B cell (primary cell): ENCODE measurements at regions of chr17 and their contacts with region 1.

Region 1: DNA sequence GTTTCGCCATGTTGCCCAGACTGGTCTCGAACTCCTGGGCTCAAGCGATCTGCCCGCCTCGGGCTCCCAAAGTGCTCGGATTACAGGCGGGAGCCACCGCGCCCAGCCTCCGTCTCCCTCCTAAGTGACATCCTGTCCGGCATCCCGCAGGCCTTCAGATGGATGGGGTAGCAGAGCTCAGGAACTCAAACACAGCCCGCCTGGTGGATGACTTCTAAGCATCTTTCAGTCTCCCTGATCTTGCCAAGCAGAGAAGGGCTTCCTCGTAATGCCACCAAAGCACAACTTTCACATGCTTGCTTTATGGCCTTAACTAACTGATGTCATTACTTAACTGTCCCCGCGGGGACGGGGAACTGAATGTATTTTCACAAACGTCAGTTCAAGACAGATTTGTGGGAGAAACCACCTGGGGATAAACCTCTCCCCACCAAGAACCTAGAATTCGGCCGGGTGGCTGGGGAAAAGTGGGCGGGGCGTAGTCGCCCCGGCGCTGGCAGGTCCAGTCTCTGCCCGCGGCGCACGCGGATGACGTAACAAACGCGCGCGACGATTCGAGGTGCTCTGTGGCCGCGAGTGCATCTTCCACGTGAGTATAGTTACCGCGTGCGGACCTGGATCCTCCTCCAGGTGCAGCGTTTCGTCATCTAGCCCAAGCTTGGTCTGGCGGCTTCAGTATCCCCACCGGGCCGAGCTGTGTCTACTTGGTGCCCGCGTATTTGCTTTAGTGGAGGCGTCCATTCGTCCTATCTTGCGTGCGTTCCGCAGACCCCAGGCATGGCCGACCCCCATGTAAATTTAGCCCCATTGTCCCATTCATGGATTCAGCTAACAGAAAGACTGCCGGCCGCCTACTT is at the start of gene PFAS:
- DNase-seq: peak; percentile 98
- ATAC-seq: peak; percentile 48
- H3K4me3 ChIP-seq: peak within 1 kb of the TSS; percentile 65 to 100 (median 78)
- H3K4me3 Mint-ChIP-seq: peak within 1 kb of the TSS; percentile 96
- H3K27ac ChIP-seq: peak within 1 kb of the TSS; percentile 99 to 100
- H3K27ac Mint-ChIP-seq: peak within 1 kb of the TSS; percentile 100
- H3K4me1 ChIP-seq: peaks cover 29 to 37% of the 10 kb centered on the region in 2 donors
- H3K4me1 Mint-ChIP-seq: peaks cover 44% of the 10 kb centered on the region
- H3K27me3 ChIP-seq: no peaks in the 10 kb centered on the region
- H3K27me3 Mint-ChIP-seq: no peaks in the 10 kb centered on the region
- CTCF ChIP-seq: no peak
- total RNA-seq, gene PFAS: 65.5 and 66.4 TPM in 2 replicates

Region 2: GRCh38 chr17:8118769-8119580 is 130.0 kb before region 1 on chr17:
- CTCF ChIA-PET with region 1: interaction called, 9 read pairs
- POLR2A ChIA-PET with region 1: interaction called, 20 read pairs
- intact Hi-C with region 1: loop called (anchors 1 kb)
- DNase-seq: peak; percentile 92
- ATAC-seq: peak; percentile 68
- H3K4me3 ChIP-seq: peak overlapping the region; percentile 61 to 85 (median 69)
- H3K4me3 Mint-ChIP-seq: peak overlapping the region; percentile 94
- H3K27ac ChIP-seq: peak overlapping the region; percentile 13 to 34
- H3K27ac Mint-ChIP-seq: peak overlapping the region; percentile 98
- H3K4me1 ChIP-seq: peaks cover 53 to 61% of the 10 kb centered on the region in 2 donors
- H3K4me1 Mint-ChIP-seq: peaks cover 56% of the 10 kb centered on the region
- H3K27me3 ChIP-seq: peaks cover 0 to 73% (median 49%) of the 10 kb centered on the region in 4 experiments
- H3K27me3 Mint-ChIP-seq: peaks cover 57% of the 10 kb centered on the region
- CTCF ChIP-seq: peak; percentile 92

Region 3: GRCh38 chr17:8173056-8173870 is 75.7 kb before region 1 on chr17:
- CTCF ChIA-PET with region 1: interaction called, 4 read pairs
- POLR2A ChIA-PET with region 1: interaction called, 17 read pairs
- intact Hi-C with region 1: loop called (anchors 1 kb)
- DNase-seq: peak; percentile 95
- ATAC-seq: peak; percentile 83
- H3K4me3 ChIP-seq: peak overlapping the region; percentile 32 to 96 (median 63)
- H3K4me3 Mint-ChIP-seq: peak overlapping the region; percentile 94
- H3K27ac ChIP-seq: peak overlapping the region; percentile 95 to 99
- H3K27ac Mint-ChIP-seq: peak overlapping the region; percentile 100
- H3K4me1 ChIP-seq: peaks cover 24 to 38% of the 10 kb centered on the region in 2 donors
- H3K4me1 Mint-ChIP-seq: peaks cover 46% of the 10 kb centered on the region
- H3K27me3 ChIP-seq: no peaks in the 10 kb centered on the region
- H3K27me3 Mint-ChIP-seq: no peaks in the 10 kb centered on the region
- CTCF ChIP-seq: no peak

Region 4: GRCh38 chr17:8209909-8210760 is 38.8 kb before region 1 on chr17 and contains the start of gene AURKB:
- CTCF ChIA-PET with region 1: interaction called, 4 read pairs
- POLR2A ChIA-PET with region 1: interaction called, 4 read pairs
- intact Hi-C with region 1: loop called (anchors 5 kb)
- DNase-seq: peak; percentile 94
- ATAC-seq: peak; percentile 100
- H3K4me3 ChIP-seq: peak within 1 kb of the TSS; percentile 65 to 95 (median 76)
- H3K4me3 Mint-ChIP-seq: peak within 1 kb of the TSS; percentile 86
- H3K27ac ChIP-seq: peak within 1 kb of the TSS; percentile 59 to 66
- H3K27ac Mint-ChIP-seq: peak within 1 kb of the TSS; percentile 39
- H3K4me1 ChIP-seq: peaks cover 9 to 22% of the 10 kb centered on the region in 2 donors
- H3K4me1 Mint-ChIP-seq: peaks cover 15% of the 10 kb centered on the region
- H3K27me3 ChIP-seq: no peaks in the 10 kb centered on the region
- H3K27me3 Mint-ChIP-seq: no peaks in the 10 kb centered on the region
- CTCF ChIP-seq: no peak
- total RNA-seq, gene AURKB: 0.41 and 1.1 TPM in 2 replicates

Region 5: GRCh38 chr17:8294814-8295316 is 45.9 kb after region 1 on chr17:
- CTCF ChIA-PET with region 1: interaction called, 28 read pairs
- POLR2A ChIA-PET with region 1: interaction called, 62 read pairs
- intact Hi-C with region 1: loop called (anchors 1 kb)
- DNase-seq: no peak
- ATAC-seq: no peak
- H3K4me3 ChIP-seq: peak overlapping the region; percentile 41 to 93 (median 89)
- H3K4me3 Mint-ChIP-seq: peak overlapping the region; percentile 94
- H3K27ac ChIP-seq: peak overlapping the region; percentile 78
- H3K27ac Mint-ChIP-seq: peak overlapping the region; percentile 95
- H3K4me1 ChIP-seq: peaks cover 5 to 21% of the 10 kb centered on the region in 2 donors
- H3K4me1 Mint-ChIP-seq: peaks cover 32% of the 10 kb centered on the region
- H3K27me3 ChIP-seq: no peaks in the 10 kb centered on the region
- H3K27me3 Mint-ChIP-seq: no peaks in the 10 kb centered on the region
- CTCF ChIP-seq: no peak

Region 6: GRCh38 chr17:8345052-8345682 is 96.2 kb after region 1 on chr17:
- CTCF ChIA-PET with region 1: no interaction called
- POLR2A ChIA-PET with region 1: no interaction called
- intact Hi-C with region 1: no loop called
- DNase-seq: no peak
- ATAC-seq: no peak
- H3K4me3 ChIP-seq: no peak overlapping the region
- H3K4me3 Mint-ChIP-seq: no peak overlapping the region
- H3K27ac ChIP-seq: no peak overlapping the region
- H3K27ac Mint-ChIP-seq: no peak overlapping the region
- H3K4me1 ChIP-seq: no peaks in the 10 kb centered on the region
- H3K4me1 Mint-ChIP-seq: no peaks in the 10 kb centered on the region
- H3K27me3 ChIP-seq: peaks cover 0 to 5% (median 2%) of the 10 kb centered on the region in 4 experiments
- H3K27me3 Mint-ChIP-seq: peaks cover 22% of the 10 kb centered on the region
- CTCF ChIP-seq: no peak